ENCODE measurements at regions of chr12 and their contacts with region 1.

Region 1: DNA sequence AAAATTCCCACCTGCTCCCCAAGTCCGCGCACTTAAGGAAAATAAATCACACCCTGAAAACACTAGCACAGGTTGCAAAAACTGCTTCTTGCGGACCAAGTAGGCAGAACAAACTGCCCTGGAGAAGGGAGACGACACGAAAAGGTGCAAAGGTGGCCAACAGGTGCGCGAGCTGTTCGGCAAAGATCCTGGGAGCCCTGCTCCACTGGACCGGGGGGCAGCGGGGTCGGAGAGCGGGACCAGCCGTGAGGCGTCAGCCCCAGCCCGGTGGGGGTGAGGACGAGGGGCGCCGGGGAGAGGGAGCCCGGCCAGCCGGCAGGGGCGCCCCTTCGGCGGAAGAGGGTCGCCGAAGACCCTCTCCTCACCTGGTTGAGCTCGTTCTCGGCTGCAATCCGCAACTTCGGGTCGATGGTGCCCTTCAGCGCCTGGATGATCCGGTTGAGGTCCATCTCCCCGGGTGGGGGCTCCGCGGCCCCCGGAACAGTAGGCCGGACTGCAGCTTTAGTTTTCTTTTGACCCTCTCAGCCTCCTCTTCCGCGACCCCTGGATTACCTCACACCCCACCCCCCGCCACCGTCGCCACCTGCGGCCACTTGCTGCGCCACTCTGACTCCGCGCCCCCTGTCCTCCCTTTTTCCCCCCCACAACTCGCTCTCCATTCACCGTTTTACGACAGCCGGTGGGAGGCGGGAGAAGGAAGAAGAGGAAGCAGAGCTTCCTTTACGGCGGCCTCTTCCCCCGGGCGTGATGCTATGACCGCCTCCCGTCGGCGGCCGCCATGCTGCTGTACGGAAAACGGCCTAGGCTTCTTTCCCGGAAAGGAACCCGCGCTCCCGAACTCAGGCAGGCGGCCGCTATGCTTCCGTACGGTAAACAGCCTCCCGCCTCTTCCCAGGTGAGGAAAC is at the start of gene IPO8:
- DNase-seq: peak; percentile 96 to 97
- H3K4me3 ChIP-seq: peak within 1 kb of the TSS; percentile 99
- H3K4me3 Mint-ChIP-seq: peak within 1 kb of the TSS; percentile 83
- H3K27ac Mint-ChIP-seq: peak within 1 kb of the TSS; percentile 85
- H3K4me1 ChIP-seq: peaks cover 10% of the 10 kb centered on the region
- H3K4me1 Mint-ChIP-seq: peaks cover 28% of the 10 kb centered on the region
- H3K27me3 ChIP-seq: no peaks in the 10 kb centered on the region
- H3K27me3 Mint-ChIP-seq: no peaks in the 10 kb centered on the region
- CTCF ChIP-seq: peak; percentile 49 to 65
- total RNA-seq, gene IPO8: 50.4 and 56.6 TPM in 2 replicates

Region 2: GRCh38 chr12:30646821-30647220 is 48.6 kb before region 1 on chr12:
- CTCF ChIA-PET with region 1: no interaction called
- POLR2A ChIA-PET with region 1: no interaction called
- intact Hi-C with region 1: no loop called
- DNase-seq: no peak
- H3K4me3 ChIP-seq: no peak overlapping the region
- H3K4me3 Mint-ChIP-seq: no peak overlapping the region
- H3K27ac Mint-ChIP-seq: no peak overlapping the region
- H3K4me1 ChIP-seq: no peaks in the 10 kb centered on the region
- H3K4me1 Mint-ChIP-seq: no peaks in the 10 kb centered on the region
- H3K27me3 ChIP-seq: no peaks in the 10 kb centered on the region
- H3K27me3 Mint-ChIP-seq: no peaks in the 10 kb centered on the region
- CTCF ChIP-seq: no peak

Region 3: GRCh38 chr12:30706476-30706875 is 11.0 kb after region 1 on chr12:
- CTCF ChIA-PET with region 1: interaction called, 7 read pairs
- POLR2A ChIA-PET with region 1: interaction called, 11 read pairs
- intact Hi-C with region 1: no loop called
- DNase-seq: no peak
- H3K4me3 ChIP-seq: no peak overlapping the region
- H3K4me3 Mint-ChIP-seq: no peak overlapping the region
- H3K27ac Mint-ChIP-seq: no peak overlapping the region
- H3K4me1 ChIP-seq: peaks cover 9% of the 10 kb centered on the region
- H3K4me1 Mint-ChIP-seq: peaks cover 11% of the 10 kb centered on the region
- H3K27me3 ChIP-seq: no peaks in the 10 kb centered on the region
- H3K27me3 Mint-ChIP-seq: no peaks in the 10 kb centered on the region
- CTCF ChIP-seq: no peak

Region 4: DNA sequence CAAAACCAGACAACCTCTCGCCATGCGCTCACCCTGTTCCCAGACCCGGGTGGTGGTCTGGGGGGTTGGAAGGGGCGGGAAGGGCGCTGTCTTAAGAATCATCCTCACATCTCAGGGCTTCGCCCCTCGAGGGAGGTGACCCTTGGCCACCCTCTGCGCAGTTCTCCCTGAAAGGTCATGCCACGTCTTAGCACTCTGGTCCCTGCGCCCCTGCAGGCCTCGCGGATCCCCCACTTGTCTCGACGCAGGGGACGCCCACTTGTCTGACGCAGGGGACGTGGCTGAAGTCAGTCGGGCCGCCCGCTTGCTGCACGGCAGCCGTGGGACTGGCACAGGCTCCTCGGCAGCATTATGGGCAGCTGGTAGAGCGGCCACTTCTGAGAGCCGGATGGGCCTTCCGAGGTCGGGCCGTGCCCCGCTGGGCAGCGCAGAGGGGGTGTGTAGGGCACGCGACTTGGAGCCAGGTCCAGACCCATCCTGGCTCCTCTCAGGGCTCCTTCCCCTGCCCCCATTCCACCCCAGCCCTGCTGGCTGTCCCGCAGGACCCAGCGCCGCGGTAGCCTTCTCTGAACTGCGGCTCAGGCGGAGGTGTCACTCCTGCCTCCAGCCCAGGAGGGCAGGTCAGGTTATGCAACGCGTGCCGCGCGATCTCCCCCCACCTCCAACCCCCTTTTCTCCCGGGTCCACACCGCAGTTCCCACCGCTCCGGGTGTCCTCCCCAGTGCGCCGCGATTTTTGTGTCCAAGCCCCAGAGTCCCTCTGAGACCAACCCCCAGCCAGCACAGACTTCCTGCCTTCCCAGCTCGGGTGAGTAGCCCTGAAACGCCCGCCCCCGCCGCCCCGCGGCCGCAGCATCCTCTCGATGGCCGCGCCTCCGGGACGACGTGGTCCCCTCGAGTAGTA is 100.2 kb after region 1 on chr12:
- CTCF ChIA-PET with region 1: interaction called, 8 read pairs
- POLR2A ChIA-PET with region 1: no interaction called
- intact Hi-C with region 1: loop called (anchors 1 kb)
- DNase-seq: peak; percentile 75 to 76
- H3K4me3 ChIP-seq: peak overlapping the region; percentile 75
- H3K4me3 Mint-ChIP-seq: peak overlapping the region; percentile 80
- H3K27ac Mint-ChIP-seq: no peak overlapping the region
- H3K4me1 ChIP-seq: peaks cover 34% of the 10 kb centered on the region
- H3K4me1 Mint-ChIP-seq: peaks cover 25% of the 10 kb centered on the region
- H3K27me3 ChIP-seq: no peaks in the 10 kb centered on the region
- H3K27me3 Mint-ChIP-seq: peaks cover 3% of the 10 kb centered on the region
- CTCF ChIP-seq: no peak

Region 5: GRCh38 chr12:31267966-31268365 is 572.5 kb after region 1 on chr12:
- CTCF ChIA-PET with region 1: interaction called, 12 read pairs
- POLR2A ChIA-PET with region 1: no interaction called
- intact Hi-C with region 1: no loop called
- DNase-seq: no peak
- H3K4me3 ChIP-seq: no peak overlapping the region
- H3K4me3 Mint-ChIP-seq: no peak overlapping the region
- H3K27ac Mint-ChIP-seq: no peak overlapping the region
- H3K4me1 ChIP-seq: no peaks in the 10 kb centered on the region
- H3K4me1 Mint-ChIP-seq: no peaks in the 10 kb centered on the region
- H3K27me3 ChIP-seq: no peaks in the 10 kb centered on the region
- H3K27me3 Mint-ChIP-seq: no peaks in the 10 kb centered on the region
- CTCF ChIP-seq: no peak